ENCODE measurements at regions of chr6 and their contacts with region 1.

Region 1: DNA sequence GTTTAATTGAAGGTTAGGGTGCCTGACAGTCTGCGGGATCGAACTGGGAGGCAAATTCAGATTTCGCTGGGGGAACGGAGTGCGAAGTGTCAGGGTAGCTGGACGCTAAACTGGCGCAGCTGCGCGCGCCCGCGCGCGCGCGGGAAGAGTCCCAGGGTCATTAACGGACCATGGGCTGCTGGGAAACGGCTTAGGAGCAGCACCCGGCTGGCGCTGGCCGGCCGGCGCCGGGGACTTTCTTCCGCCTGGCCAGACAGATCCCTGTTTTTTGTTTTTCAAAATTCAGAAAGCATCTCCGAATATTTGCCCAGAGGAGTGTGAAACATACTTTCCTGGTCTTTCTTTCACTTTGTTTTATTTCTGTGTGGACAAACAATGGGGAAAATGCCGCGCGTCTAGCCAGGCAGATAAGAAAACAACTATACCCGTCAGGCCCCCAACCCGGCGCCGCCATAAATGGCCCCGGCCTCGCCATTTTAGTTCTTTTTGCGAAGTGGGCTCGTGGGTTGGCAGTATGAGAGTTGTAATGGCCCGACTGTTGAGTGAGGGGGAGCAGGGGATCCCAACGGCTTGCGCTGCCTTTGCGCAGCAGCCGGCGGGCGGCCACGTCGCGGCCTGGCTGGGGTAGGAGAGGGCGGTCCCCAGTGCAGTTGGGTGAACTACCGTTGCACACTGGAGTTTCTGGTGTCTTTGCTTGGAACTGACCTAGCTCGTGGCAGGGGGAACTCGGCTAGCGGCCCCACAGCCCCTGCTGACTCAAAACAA is 7.1 kb downstream of the HSPA1B start:
- DNase-seq: peak; percentile 97
- H3K4me3 ChIP-seq: peak overlapping the region; percentile 72 to 94 (median 82)
- H3K27ac ChIP-seq: peak overlapping the region; percentile 93 to 97 (median 95)
- H3K4me1 ChIP-seq: peaks cover 60 to 79% (median 75%) of the 10 kb centered on the region in 4 donors
- H3K27me3 ChIP-seq: no peaks in the 10 kb centered on the region
- CTCF ChIP-seq: peak in 1 of 3 experiments; percentile 15
- EP300 ChIP-seq: no peak
- POLR2A ChIP-seq: peak; percentile 52

Region 2: GRCh38 chr6:31239854-31240253 is 594.8 kb before region 1 on chr6:
- intact Hi-C with region 1: no loop called
- DNase-seq: no peak
- H3K4me3 ChIP-seq: no peak overlapping the region
- H3K27ac ChIP-seq: no peak overlapping the region
- H3K4me1 ChIP-seq: no peaks in the 10 kb centered on the region
- H3K27me3 ChIP-seq: no peaks in the 10 kb centered on the region
- CTCF ChIP-seq: no peak
- EP300 ChIP-seq: no peak
- POLR2A ChIP-seq: no peak

Region 3: GRCh38 chr6:31680840-31681671 is 153.6 kb before region 1 on chr6 and contains the start of gene LY6G5C:
- intact Hi-C with region 1: loop called (anchors 5 kb)
- DNase-seq: peak; percentile 96
- H3K4me3 ChIP-seq: peak within 1 kb of the TSS; percentile 52 to 65 (median 58)
- H3K27ac ChIP-seq: peak within 1 kb of the TSS; percentile 68 to 84 (median 80)
- H3K4me1 ChIP-seq: peaks cover 12 to 33% (median 30%) of the 10 kb centered on the region in 4 donors
- H3K27me3 ChIP-seq: no peaks in the 10 kb centered on the region
- CTCF ChIP-seq: peak; percentile 70 to 91 (median 77)
- EP300 ChIP-seq: no peak
- POLR2A ChIP-seq: no peak
- total RNA-seq, gene LY6G5C: 2.0 to 2.9 TPM in 2 of 4 donors, not detected in the others

Region 4: DNA sequence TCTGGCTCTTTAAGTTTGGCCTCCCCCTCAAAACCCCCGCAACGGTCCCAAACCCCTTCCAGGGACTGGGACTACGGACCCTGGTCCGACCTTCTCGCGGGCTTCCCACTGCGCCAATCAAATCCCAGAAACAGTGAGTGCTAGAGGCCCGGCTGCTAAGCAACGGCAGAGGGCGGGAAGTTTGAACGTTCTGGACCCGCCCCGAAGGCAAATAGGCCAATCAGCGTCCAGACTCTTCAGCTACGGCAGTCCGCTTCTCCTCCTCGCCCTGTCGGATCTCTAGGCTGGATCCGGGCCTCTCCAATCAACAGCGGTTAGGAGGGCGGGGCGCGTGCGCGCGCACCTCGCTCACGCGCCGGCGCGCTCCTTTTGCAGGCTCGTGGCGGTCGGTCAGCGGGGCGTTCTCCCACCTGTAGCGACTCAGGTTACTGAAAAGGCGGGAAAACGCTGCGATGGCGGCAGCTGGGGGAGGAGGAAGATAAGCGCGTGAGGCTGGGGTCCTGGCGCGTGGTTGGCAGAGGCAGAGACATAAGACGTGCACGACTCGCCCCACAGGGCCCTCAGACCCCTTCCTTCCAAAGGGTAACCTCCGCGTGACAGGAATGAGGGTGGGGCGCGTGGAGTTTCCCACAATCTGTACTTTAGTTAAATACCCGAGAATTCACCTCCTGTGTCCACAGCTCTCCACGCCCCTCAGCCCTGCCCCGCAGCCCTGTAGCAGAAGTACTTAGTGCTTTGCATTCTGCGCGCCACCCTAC is 94.8 kb before region 1 on chr6 and contains the start of gene MSH5:
- intact Hi-C with region 1: loop called (anchors 2 kb)
- DNase-seq: peak; percentile 100
- H3K4me3 ChIP-seq: peak within 1 kb of the TSS; percentile 69 to 78 (median 73)
- H3K27ac ChIP-seq: peak within 1 kb of the TSS; percentile 48 to 90 (median 78)
- H3K4me1 ChIP-seq: peaks cover 29 to 47% (median 43%) of the 10 kb centered on the region in 4 donors
- H3K27me3 ChIP-seq: no peaks in the 10 kb centered on the region
- CTCF ChIP-seq: peak in 1 of 3 experiments; percentile 12
- EP300 ChIP-seq: no peak
- POLR2A ChIP-seq: no peak
- total RNA-seq, gene MSH5: 4.0 to 6.4 (median 4.5) TPM

Region 5: GRCh38 chr6:31769684-31770371 is 64.8 kb before region 1 on chr6:
- intact Hi-C with region 1: loop called (anchors 5 kb)
- DNase-seq: no peak
- H3K4me3 ChIP-seq: no peak overlapping the region
- H3K27ac ChIP-seq: no peak overlapping the region
- H3K4me1 ChIP-seq: peaks cover 0 to 25% (median 16%) of the 10 kb centered on the region in 4 donors
- H3K27me3 ChIP-seq: peaks cover 0 to 3% (median 0%) of the 10 kb centered on the region in 4 donors
- CTCF ChIP-seq: peak; percentile 74 to 93 (median 86)
- EP300 ChIP-seq: no peak
- POLR2A ChIP-seq: no peak

Region 6: DNA sequence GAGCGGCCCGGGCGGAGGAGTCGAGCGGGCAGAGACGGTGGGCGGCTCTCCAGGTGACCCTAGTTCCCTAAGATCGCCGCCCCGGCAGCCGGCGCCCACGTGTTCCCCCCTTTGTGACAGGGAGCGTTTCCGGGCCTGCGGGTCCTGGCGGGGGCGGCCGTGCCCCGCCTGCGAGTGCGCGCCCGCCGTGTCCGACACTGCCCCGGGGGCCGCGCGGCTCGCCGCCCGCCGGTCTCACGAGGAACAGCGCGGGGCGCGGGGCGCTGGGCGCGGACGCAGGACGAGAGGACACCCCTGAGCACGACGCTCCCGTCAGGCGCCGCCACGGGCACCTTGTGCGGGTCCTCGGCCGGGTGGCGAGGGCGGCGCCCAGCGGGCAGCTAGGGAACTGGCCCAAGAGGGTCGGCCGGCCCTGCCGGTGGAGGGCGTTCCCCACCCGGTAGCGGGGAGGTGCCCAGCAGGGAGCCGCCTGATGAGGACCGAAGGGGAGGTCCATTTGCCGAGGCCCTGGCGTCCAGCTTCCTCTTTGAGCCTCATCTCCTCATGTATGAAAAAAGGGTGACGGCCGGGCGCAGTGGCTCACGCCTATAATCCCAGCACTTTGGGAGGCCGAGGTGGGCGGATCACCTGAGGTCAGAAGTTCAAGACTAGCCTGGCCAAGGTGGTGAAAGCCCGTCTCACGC is 38.9 kb before region 1 on chr6 and contains the start of gene VARS1:
- intact Hi-C with region 1: loop called (anchors 5 kb)
- DNase-seq: peak; percentile 95
- H3K4me3 ChIP-seq: peak within 1 kb of the TSS; percentile 92 to 93 (median 93)
- H3K27ac ChIP-seq: peak within 1 kb of the TSS; percentile 92 to 99 (median 95)
- H3K4me1 ChIP-seq: peaks cover 13 to 34% (median 29%) of the 10 kb centered on the region in 4 donors
- H3K27me3 ChIP-seq: no peaks in the 10 kb centered on the region
- CTCF ChIP-seq: peak; percentile 81 to 93 (median 87)
- EP300 ChIP-seq: no peak
- POLR2A ChIP-seq: no peak
- total RNA-seq, gene VARS1: 25.0 to 53.2 (median 34.8) TPM

Region 7: GRCh38 chr6:31971993-31972708 is 137.5 kb after region 1 on chr6 and contains the start of gene DXO:
- intact Hi-C with region 1: no loop called
- DNase-seq: peak; percentile 99
- H3K4me3 ChIP-seq: peak within 1 kb of the TSS; percentile 58 to 88 (median 78)
- H3K27ac ChIP-seq: peak within 1 kb of the TSS; percentile 92 to 97 (median 95)
- H3K4me1 ChIP-seq: peaks cover 21 to 48% (median 34%) of the 10 kb centered on the region in 4 donors
- H3K27me3 ChIP-seq: no peaks in the 10 kb centered on the region
- CTCF ChIP-seq: no peak
- EP300 ChIP-seq: no peak
- POLR2A ChIP-seq: peak; percentile 34
- total RNA-seq, gene DXO: 12.9 to 18.4 (median 15.9) TPM

Region 8: GRCh38 chr6:32337186-32337805 is 502.7 kb after region 1 on chr6:
- intact Hi-C with region 1: no loop called
- DNase-seq: no peak
- H3K4me3 ChIP-seq: no peak overlapping the region
- H3K27ac ChIP-seq: no peak overlapping the region
- H3K4me1 ChIP-seq: no peaks in the 10 kb centered on the region
- H3K27me3 ChIP-seq: no peaks in the 10 kb centered on the region
- CTCF ChIP-seq: no peak
- EP300 ChIP-seq: no peak
- POLR2A ChIP-seq: no peak

Region 9: DNA sequence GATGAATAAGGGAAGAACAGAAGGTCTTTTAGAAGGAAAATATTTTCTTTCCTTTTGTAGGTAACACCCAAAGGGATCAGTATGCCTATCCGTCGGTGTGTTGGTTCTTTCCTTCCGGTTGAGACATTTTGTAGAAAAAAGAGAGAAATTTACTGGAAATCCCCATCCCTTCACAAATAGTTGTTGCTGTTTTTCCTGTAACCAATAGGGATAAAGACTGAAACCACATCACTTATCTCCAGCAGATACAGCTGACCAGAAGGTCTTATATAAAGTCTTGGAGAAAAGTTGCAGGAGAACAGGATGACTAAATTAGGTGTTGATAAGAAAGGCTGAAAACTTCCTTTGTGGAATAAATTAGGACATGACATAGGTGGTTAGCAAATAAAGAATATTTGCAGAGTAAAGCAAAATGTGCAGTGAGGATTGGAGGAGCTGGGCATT is 769.8 kb after region 1 on chr6:
- intact Hi-C with region 1: no loop called
- DNase-seq: no peak
- H3K4me3 ChIP-seq: no peak overlapping the region
- H3K27ac ChIP-seq: no peak overlapping the region
- H3K4me1 ChIP-seq: no peaks in the 10 kb centered on the region
- H3K27me3 ChIP-seq: no peaks in the 10 kb centered on the region
- CTCF ChIP-seq: no peak
- EP300 ChIP-seq: no peak
- POLR2A ChIP-seq: no peak

Measured in esophagus muscularis mucosa (tissue), 4 donors.